ENCODE measurements at regions of chr7 and their contacts with region 1.

Region 1: DNA sequence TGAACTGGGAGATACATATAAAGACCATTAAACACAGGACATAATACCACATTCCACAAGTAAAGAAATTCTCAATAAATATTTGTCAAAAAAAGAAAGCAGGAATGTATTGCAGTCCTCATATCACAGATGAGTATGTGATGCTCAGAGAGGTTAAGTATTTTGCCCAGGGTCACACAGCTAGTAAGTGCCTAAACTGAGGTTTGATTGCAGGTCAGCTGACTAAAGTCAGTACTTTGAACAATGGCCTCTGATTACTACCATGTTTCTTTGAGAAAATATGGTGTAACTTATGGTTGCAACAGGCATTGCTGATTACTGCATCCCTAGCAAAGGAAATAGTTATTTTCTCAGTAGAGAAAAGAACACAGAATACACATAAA is 267.1 kb downstream of the ELMO1 start:
- DNase-seq: no peak
- ATAC-seq: no peak

Region 2: GRCh38 chr7:36487756-36488336 is 693.7 kb before region 1 on chr7:
- intact Hi-C with region 1: loop called (anchors 10 kb)
- DNase-seq: no peak
- ATAC-seq: no peak

Region 3: GRCh38 chr7:36967387-36967786 is 214.2 kb before region 1 on chr7:
- intact Hi-C with region 1: loop called (anchors 5 kb)
- DNase-seq: peak; percentile 36
- ATAC-seq: peak; percentile 96

Region 4: DNA sequence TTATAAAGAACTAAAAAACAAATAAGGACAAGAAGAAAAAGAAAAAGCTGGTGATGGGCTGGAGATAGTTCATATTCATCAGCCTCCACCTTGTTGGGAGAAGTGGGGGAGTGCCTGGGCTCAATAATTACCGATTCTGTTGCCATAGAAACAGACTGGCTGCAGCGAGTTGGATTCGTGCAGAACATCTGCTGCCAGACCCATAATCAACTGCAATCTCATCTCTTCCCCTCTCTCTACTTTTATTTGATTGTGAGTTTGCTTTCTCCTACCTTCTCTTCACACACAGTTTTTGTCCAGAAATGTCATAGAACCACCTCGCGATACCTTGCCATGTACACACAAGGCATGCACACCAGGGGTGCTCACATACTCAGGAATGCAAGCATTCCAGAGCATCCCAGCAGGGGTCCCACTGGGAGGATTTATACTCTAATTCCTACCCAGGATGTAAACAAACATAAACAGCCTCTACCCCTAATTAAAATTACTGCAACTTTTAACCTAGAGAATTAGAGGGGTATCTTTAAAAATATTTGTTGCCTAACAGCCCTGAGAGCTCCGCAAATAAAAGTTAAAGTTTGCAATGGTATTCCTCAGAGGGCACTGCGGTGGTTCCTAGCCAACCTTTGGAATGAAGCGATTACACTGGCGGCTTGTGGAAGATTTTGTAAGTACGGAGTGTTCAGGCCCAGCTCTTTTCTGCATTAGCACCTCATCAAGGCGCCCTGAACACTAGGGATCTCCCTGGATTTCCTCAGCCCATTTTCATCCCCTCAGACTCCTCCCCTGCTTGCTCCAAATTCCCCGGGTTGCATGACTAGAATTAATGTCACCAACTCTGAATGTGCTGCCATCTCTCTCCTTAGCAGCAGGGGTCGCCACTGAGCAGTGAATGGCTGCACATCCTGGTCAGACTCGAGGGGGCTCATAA is 194.8 kb before region 1 on chr7:
- intact Hi-C with region 1: loop called (anchors 5 kb)
- DNase-seq: peak; percentile 71
- ATAC-seq: peak; percentile 61

Region 5: GRCh38 chr7:37369906-37370305 is 188.4 kb after region 1 on chr7:
- intact Hi-C with region 1: no loop called
- DNase-seq: no peak
- ATAC-seq: peak; percentile 53

Region 6: DNA sequence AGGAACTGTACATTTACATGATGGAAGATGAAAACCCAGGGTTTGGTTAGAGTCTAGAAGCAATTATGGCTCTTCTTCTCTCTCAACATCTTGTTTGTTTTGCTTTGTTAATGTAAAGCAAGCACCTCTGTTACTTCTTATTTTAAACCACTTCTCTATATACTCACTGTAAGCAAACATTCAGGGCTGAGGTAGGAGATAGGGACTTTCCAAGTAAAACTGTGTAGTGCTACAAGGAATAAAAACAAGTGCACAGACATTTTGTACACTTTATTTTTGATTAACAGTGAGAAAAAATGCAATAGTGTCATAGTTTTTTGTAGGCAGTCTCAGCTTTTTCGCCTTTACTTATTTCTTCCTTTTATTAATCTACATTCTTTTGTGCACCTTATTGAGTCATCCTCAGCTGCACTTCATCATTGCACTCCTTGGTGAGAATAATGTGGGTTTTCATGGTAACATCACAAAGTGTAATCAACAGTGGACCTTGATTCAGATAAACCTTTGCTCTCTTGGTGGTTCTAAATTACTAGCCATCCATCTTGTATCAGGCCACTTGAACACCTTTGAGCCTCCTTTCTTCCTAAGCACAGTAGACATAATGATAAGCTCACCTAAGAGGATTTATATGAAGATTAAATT is 214.2 kb after region 1 on chr7:
- intact Hi-C with region 1: no loop called
- DNase-seq: no peak
- ATAC-seq: no peak

Measured in left ventricle myocardium superior (tissue), 1 donor.